Endothelial cell of umbilical vein (primary cell): ENCODE measurements at regions of chr1 and their contacts with region 1.

Region 1: DNA sequence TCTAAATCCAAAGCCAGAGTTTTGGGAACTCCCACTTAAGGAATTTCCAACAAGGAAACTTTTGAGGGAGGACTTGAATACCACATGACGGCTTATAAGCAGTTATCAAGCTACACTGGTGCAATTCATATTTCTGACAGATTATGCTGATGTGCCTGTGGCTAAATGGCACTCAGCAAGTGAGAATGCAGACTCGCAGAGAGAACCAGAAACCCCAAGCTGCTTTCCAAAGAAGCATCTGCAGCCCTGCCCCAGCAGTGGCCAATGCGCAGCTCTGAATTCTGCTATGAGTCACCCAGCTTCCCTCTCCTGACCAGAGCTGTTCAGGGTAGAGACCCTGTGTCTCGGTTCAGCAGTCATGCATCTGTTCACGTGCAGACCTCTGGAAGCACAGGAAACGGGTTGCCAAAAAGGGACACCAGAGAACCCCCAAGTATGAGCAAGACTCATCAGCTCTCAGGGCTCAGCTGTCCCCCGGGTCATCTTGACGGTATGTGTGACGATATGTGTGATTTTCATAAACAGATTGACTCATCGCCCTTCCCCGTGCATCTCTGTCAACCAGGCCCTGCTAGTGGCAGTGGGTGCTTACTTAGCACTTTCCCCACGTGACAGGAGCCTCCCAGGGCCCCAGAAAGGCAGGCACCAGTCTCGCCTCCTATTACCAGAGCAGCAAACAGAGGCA is 76.3 kb downstream of the ITPKB start:
- DNase-seq: peak; percentile 86
- H3K4me3 ChIP-seq: no peak overlapping the region
- H3K27ac ChIP-seq: peak overlapping the region; percentile 86
- H3K4me1 ChIP-seq: peaks cover 51% of the 10 kb centered on the region
- H3K27me3 ChIP-seq: no peaks in the 10 kb centered on the region
- CTCF ChIP-seq: no peak
- POLR2A ChIP-seq: no peak

Region 2: GRCh38 chr1:226649780-226650179 is 13.0 kb before region 1 on chr1:
- CTCF ChIA-PET with region 1: interaction called, 8 read pairs
- POLR2A ChIA-PET with region 1: no interaction called
- dilution Hi-C with region 1: no loop called
- intact Hi-C with region 1: loop called (anchors 1 kb)
- DNase-seq: peak; percentile 68
- H3K4me3 ChIP-seq: no peak overlapping the region
- H3K27ac ChIP-seq: no peak overlapping the region
- H3K4me1 ChIP-seq: peaks cover 12% of the 10 kb centered on the region
- H3K27me3 ChIP-seq: no peaks in the 10 kb centered on the region
- CTCF ChIP-seq: peak in 1 of 2 donors; percentile 38
- POLR2A ChIP-seq: no peak

Region 3: GRCh38 chr1:226691247-226691646 is 28.5 kb after region 1 on chr1:
- CTCF ChIA-PET with region 1: interaction called, 3 read pairs
- POLR2A ChIA-PET with region 1: no interaction called
- dilution Hi-C with region 1: no loop called
- intact Hi-C with region 1: loop called (anchors 1 kb)
- DNase-seq: peak; percentile 26
- H3K4me3 ChIP-seq: no peak overlapping the region
- H3K27ac ChIP-seq: peak overlapping the region; percentile 42
- H3K4me1 ChIP-seq: peaks cover 14% of the 10 kb centered on the region
- H3K27me3 ChIP-seq: no peaks in the 10 kb centered on the region
- CTCF ChIP-seq: no peak
- POLR2A ChIP-seq: no peak

Region 4: GRCh38 chr1:226702957-226703831 is 40.4 kb after region 1 on chr1:
- CTCF ChIA-PET with region 1: no interaction called
- POLR2A ChIA-PET with region 1: no interaction called
- dilution Hi-C with region 1: no loop called
- intact Hi-C with region 1: loop called (anchors 1 kb)
- DNase-seq: peak; percentile 73
- H3K4me3 ChIP-seq: peak overlapping the region; percentile 49 to 56 (median 54)
- H3K27ac ChIP-seq: peak overlapping the region; percentile 49
- H3K4me1 ChIP-seq: peaks cover 8% of the 10 kb centered on the region
- H3K27me3 ChIP-seq: no peaks in the 10 kb centered on the region
- CTCF ChIP-seq: no peak
- POLR2A ChIP-seq: peak; percentile 81

Region 5: DNA sequence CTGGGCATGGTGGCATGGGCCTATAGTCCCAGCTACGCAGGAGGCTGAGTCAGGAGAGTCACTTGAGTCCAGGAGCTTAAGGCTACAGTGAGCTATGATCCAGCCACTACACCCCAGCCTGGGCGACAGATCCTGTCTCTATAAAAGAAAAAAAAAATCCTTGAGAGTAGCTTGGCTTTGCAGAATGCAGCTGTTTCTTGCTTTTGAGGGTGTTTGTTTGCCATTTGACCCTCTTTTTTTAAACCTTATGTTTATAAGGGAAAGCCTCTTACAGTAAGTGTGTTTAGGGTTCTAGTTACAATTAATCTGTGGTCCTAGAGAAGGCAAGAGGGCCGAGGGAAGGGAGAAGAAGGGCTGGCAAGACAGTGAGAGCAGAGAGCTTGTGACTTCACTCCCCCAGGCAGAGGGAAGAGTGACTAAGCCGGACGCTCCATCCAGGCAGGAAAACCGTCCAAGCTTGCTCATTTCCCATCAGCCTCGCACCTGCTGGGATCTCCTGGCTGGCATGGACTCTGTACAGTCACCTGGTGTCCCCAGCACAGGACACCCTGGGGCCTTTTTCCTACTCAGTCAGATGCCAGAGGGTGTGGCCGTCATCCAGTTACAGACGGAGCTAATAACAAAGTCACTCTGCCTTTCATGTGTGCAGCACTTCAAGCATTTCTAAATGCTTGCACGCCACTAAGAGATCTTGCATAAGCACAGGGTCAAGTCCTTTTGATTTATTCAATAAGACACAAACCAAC is 152.1 kb after region 1 on chr1:
- CTCF ChIA-PET with region 1: interaction called, 7 read pairs
- POLR2A ChIA-PET with region 1: no interaction called
- dilution Hi-C with region 1: no loop called
- intact Hi-C with region 1: loop called (anchors 1 kb)
- DNase-seq: peak; percentile 96
- H3K4me3 ChIP-seq: no peak overlapping the region
- H3K27ac ChIP-seq: peak overlapping the region; percentile 95
- H3K4me1 ChIP-seq: peaks cover 46% of the 10 kb centered on the region
- H3K27me3 ChIP-seq: no peaks in the 10 kb centered on the region
- CTCF ChIP-seq: no peak
- POLR2A ChIP-seq: no peak

Region 6: DNA sequence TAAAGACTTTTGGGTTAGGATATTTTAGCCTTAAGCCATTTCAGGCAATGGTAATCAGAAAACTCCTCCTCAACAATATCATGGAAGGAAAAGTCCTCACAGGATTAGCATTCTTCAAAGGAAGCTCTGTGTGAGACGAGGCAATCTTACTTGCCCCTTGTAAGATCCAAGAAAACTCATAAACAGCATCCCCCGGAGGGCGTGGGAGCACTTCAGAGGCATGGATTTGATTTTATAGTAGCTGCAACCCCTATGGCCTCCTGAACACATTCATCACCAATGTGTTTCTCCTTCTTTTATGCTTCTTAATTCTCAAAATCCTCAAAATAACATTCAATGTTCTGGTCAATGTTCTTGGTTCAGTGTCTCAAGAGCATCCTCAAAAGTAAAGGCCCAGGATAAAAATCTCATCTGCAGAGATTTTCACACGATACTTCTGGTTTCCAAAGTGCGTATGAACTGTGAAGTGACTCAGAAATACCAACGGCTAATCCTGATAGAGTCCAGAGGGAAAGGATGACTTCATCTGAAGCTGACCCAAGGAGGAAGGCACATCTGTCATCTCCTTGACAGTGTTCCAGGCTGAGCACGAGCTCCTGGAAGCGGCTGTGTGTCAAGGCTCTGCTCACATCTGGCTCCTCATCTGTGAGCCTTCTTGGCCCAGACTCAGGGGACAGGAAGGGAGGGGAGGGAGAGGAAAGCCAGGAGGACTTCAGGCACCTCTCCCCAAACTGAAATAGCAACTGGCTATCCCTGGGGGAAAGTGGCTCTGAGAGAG is 158.3 kb after region 1 on chr1:
- CTCF ChIA-PET with region 1: interaction called, 7 read pairs
- POLR2A ChIA-PET with region 1: no interaction called
- dilution Hi-C with region 1: no loop called
- intact Hi-C with region 1: loop called (anchors 1 kb)
- DNase-seq: peak; percentile 96
- H3K4me3 ChIP-seq: no peak overlapping the region
- H3K27ac ChIP-seq: peak overlapping the region; percentile 83
- H3K4me1 ChIP-seq: peaks cover 46% of the 10 kb centered on the region
- H3K27me3 ChIP-seq: no peaks in the 10 kb centered on the region
- CTCF ChIP-seq: no peak
- POLR2A ChIP-seq: no peak